Posterior vena cava (tissue), 2 donors: ENCODE measurements at regions of chr12 and their contacts with region 1.

Region 1: GRCh38 chr12:57822392-57823130 is 4.0 kb upstream of the AVIL start:
- DNase-seq: no peak

Region 2: DNA sequence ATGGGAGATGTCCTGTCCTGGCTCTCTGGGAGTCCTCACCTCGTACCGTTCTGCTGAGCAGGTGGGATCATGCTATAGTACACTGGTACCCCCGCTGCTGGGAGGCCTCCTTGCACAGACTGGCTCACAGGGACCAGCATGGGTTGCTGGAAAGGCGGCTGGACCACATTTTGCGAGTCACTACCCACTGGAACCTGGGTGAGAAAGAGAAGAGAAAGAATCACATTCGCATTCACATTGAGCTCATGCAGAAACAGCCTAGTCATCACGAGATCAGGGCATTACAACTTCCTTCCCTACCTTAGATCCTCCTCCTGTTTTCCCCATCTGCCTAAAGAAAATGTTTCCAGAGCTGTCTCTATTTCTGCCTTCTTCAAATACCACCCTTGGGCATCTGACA is 554.3 kb before region 1 on chr12:
- intact Hi-C with region 1: loop called in 1 of 2 experiments (anchors 10 kb)
- DNase-seq: no peak

Region 3: DNA sequence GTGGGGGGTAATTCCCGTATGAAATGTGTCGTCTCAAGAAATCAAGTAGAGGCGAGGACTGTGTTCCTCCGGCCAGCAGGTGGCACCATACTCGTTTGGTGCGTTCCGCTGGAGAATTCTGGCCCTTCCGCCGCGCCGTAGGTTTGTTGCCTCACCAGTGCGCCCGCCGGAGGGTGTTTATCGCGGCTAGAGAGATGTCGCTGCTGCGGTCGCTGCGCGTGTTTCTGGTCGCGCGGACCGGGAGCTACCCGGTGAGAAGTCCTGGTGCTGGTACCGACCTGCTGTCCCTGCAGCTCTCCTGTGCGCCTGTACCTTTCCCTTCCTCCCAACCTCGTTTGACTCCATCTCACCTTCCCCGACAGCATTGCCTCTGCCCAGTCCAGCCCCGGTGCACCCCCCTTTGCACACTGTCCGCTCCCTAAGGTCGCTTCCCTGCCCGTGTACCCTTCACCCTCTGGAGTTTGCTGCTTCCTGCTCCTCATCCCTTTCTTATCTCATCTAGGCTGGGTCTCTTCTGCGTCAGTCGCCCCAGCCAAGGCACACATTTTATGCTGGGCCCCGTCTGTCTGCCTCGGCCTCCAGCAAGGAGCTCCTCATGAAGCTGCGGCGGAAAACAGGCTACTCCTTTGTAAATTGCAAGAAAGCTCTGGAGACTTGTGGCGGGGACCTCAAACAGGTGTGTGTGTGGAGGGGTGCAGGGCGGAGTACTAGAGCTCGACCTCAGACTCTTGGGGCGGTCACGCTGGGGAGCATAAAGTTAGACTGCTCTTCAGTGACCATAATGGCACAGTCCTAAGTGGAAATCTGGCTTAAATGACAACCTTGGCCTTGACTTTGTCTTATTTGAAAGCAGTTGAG is 39.7 kb before region 1 on chr12 and contains the start of gene TSFM:
- intact Hi-C with region 1: no loop called
- DNase-seq: peak; percentile 99
- total RNA-seq, gene TSFM: 15.9 to 16.4 TPM